Panc1 (cell line): ENCODE measurements at regions of chr9 and their contacts with region 1.

Region 1: GRCh38 chr9:124040935-124041816 is 29.6 kb downstream of the LHX2 start:
- DNase-seq: peak; percentile 17
- ATAC-seq: peak; percentile 65
- H3K4me3 ChIP-seq: peak overlapping the region; percentile 41 to 56
- H3K27ac ChIP-seq: peak overlapping the region; percentile 51
- H3K4me1 ChIP-seq: peaks cover 5% of the 10 kb centered on the region; the same call in 1 of the 2 replicates
- H3K27me3 ChIP-seq: no peaks in the 10 kb centered on the region
- CTCF ChIP-seq: peak; percentile 96

Region 2: GRCh38 chr9:123724211-123724796 is 316.9 kb before region 1 on chr9:
- CTCF ChIA-PET with region 1: interaction called, 10 read pairs
- POLR2A ChIA-PET with region 1: no interaction called
- in situ Hi-C with region 1: no loop called
- intact Hi-C with region 1: no loop called
- DNase-seq: no peak
- ATAC-seq: no peak
- H3K4me3 ChIP-seq: no peak overlapping the region
- H3K27ac ChIP-seq: no peak overlapping the region
- H3K4me1 ChIP-seq: no peaks in the 10 kb centered on the region
- H3K27me3 ChIP-seq: no peaks in the 10 kb centered on the region
- CTCF ChIP-seq: peak; percentile 16; the same call in 1 of the 2 replicates

Region 3: DNA sequence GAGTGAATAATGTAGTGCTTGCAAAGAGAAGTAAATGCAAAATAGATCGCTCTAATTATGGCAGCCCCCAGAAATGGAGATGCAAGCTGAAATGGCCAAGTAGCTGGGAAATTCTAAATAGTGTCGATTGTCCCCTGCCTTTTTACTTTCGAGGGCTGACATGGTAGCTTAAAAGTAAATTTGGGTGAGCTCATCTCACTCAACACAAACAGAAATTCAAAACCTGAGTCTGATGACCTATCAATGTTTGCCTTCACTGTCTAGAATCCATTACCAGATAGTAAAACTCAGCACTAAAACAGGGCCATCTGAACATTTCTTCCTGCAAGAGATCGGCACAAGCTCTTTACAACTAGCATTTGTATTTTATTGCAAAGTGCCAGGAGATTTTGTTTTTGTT is 36.6 kb before region 1 on chr9:
- CTCF ChIA-PET with region 1: interaction called, 11 read pairs
- POLR2A ChIA-PET with region 1: no interaction called
- in situ Hi-C with region 1: no loop called
- intact Hi-C with region 1: no loop called
- DNase-seq: no peak
- ATAC-seq: no peak
- H3K4me3 ChIP-seq: no peak overlapping the region
- H3K27ac ChIP-seq: no peak overlapping the region
- H3K4me1 ChIP-seq: no peaks in the 10 kb centered on the region
- H3K27me3 ChIP-seq: peaks cover 47% of the 10 kb centered on the region
- CTCF ChIP-seq: no peak

Region 4: GRCh38 chr9:124126571-124127289 is 85.6 kb after region 1 on chr9:
- CTCF ChIA-PET with region 1: interaction called, 13 read pairs
- POLR2A ChIA-PET with region 1: no interaction called
- in situ Hi-C with region 1: no loop called
- intact Hi-C with region 1: no loop called
- DNase-seq: peak; percentile 57
- ATAC-seq: peak; percentile 79
- H3K4me3 ChIP-seq: no peak overlapping the region
- H3K27ac ChIP-seq: peak overlapping the region; percentile 79
- H3K4me1 ChIP-seq: peaks cover 18% of the 10 kb centered on the region
- H3K27me3 ChIP-seq: no peaks in the 10 kb centered on the region
- CTCF ChIP-seq: peak; percentile 90